ENCODE measurements at regions of chr1 and their contacts with region 1.

Region 1: DNA sequence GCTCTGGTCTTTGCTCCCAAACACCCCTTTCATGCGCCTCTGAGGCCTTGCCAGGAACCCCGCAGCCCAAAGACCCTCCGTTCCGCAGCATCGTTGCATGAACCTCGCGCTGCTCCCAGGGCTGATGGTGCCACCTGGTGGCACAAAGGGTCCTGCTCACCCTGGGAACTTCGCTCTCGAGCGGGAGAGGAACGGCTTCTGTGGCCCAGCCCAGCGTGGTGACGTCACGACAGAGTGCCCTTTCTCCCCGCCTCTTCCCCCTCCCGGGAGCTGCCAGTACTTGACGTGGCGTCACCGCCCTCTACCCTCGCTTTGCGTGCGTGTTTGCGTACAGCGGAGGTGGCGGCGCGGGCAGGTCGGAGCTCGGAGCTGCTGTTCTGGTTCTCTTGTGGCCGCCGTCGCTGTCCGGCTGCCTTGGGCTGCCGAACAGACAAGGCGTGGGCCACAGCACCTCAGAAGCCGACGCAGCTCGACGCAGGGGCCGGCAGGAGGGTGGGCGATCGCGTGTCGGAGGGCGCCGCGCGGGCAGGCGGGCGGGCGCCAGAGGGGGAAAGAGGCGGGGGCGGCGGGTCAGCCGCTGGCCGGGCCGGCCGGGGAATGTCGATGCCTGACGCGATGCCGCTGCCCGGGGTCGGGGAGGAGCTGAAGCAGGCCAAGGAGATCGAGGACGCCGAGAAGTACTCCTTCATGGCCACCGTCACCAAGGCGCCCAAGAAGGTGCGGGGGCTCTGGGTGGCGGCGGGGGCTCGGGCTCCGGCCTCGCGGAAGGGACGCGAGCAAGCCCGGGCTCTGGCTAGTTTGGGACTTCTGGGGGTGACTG is at the start of gene AHCYL1:
- DNase-seq: peak; percentile 98 to 99 (median 98)
- H3K4me3 ChIP-seq: peak within 1 kb of the TSS; percentile 76 to 90 (median 81)
- H3K27ac ChIP-seq: peak within 1 kb of the TSS; percentile 84 to 91
- H3K4me1 ChIP-seq: peaks cover 9 to 33% (median 17%) of the 10 kb centered on the region in 4 experiments
- H3K27me3 ChIP-seq: no peaks in the 10 kb centered on the region

Region 2: DNA sequence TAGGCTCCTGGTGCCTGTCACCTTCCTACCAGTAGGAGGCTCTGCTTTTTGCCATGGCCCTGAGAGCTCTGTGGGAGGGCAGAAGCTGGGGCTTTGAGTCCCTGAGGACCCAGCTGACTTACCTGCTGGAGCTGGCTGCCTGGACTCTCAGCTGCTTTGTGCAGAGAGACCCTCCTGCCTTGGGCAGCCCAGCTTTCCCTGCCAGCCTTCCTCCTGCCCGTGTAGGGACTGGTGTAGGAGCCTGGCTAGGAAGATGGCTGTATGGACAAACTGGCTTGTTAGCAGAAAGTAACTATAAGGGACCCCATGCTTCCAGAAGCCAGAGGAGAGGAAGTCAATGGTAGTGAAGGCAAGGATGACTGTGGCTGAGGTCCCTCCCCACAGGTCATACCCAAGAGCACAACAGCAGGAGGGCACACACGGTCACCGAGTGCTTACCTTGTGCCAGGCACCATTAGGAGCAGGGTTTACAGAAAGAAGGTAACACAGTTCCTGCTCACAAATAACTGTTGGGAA is 745.0 kb before region 1 on chr1:
- CTCF ChIA-PET with region 1: no interaction called
- POLR2A ChIA-PET with region 1: no interaction called
- DNase-seq: peak; percentile 27 to 47 (median 43)
- H3K4me3 ChIP-seq: no peak overlapping the region
- H3K27ac ChIP-seq: no peak overlapping the region
- H3K4me1 ChIP-seq: no peaks in the 10 kb centered on the region
- H3K27me3 ChIP-seq: peaks cover 0 to 46% (median 22%) of the 10 kb centered on the region in 5 experiments

Region 3: GRCh38 chr1:109548321-109549267 is 436.1 kb before region 1 on chr1 and contains the start of gene GNAI3:
- CTCF ChIA-PET with region 1: interaction called, 10 read pairs
- POLR2A ChIA-PET with region 1: no interaction called
- DNase-seq: peak; percentile 98 to 99 (median 99)
- H3K4me3 ChIP-seq: peak within 1 kb of the TSS; percentile 96 to 99 (median 98)
- H3K27ac ChIP-seq: peak within 1 kb of the TSS; percentile 95 to 98
- H3K4me1 ChIP-seq: peaks cover 21 to 35% (median 32%) of the 10 kb centered on the region in 4 experiments
- H3K27me3 ChIP-seq: no peaks in the 10 kb centered on the region

Region 4: DNA sequence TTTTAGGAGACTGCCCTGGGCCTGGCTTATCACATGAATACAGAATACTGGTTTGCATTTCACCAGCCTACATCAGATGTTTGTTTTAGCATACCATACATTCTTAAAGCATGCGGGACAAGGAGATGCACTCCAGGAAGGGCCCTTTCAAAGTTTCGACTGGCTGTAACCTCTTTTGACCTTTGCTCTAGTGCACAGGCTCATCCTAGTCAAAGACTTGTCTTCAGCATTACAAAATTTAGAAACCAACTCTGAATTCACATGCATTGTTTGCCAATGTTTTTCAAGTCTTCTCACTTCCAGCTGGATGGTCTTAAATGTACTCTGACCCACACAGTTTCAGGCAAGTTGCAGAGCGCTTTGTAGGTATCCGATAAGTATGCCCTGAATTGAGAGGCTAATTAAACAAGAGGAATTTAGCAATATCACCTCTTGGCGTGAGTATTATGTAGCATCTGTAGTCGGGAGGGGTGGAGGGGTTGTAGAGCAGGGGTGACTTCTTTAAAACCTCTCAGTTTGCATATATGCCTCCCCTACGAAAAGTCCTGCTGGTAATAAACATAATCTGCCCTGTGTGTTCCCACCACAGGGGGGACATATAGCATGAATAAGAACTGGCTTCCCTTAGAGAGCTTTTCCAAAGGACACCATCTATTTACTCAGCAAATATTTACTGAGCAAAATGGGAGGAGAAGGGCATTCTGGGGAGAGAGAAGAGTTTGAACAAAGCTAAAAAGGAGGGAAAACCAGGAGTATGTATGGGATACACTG is 24.5 kb before region 1 on chr1:
- CTCF ChIA-PET with region 1: interaction called, 21 read pairs
- POLR2A ChIA-PET with region 1: interaction called, 3 read pairs
- DNase-seq: no peak
- H3K4me3 ChIP-seq: no peak overlapping the region
- H3K27ac ChIP-seq: no peak overlapping the region
- H3K4me1 ChIP-seq: no peaks in the 10 kb centered on the region
- H3K27me3 ChIP-seq: no peaks in the 10 kb centered on the region

Region 5: DNA sequence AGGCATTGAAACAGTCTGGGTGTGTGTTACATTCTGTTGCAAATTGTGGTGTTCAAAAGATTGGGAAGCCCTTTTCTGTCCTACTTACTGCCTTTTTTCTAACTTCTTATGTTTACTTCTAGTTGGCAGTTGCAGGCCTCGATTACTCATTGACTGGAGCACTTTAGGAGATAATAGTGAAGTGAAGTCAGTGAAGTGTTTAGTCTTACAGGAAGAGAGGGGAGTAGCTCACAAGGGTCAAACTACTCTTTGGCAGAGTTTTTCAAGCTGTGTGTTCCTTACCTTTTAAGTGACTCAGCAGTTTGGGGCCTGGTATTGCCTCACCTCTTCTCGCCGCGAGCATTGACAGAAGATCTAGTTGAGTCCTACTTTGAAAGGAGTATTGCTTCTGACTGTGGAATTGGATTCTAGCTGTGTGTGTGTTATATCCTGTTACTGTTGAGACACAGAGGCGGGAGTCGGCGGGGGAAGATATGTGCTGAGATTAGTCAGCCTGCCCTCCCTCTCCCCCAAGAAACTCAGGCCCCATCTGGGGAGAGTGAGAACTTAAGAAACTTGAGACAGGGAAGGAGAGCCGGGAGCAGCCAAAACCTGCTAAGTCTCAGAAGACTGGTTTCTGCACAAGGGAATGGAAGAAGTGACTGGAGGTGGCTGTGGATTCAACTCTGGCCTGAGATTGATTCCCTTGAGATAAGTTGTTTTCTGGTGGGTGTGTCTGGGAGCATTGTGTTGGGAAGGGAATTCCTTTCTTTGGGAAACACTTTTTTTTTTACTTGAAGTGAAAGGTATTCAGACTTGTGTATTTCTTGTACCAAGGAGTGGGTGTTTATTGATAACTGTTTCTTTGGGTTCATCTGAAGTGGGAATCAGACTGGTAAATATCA is 19.3 kb after region 1 on chr1:
- CTCF ChIA-PET with region 1: interaction called, 47 read pairs
- POLR2A ChIA-PET with region 1: no interaction called
- DNase-seq: peak; percentile 26 to 74 (median 62)
- H3K4me3 ChIP-seq: no peak overlapping the region
- H3K27ac ChIP-seq: peak overlapping the region; percentile 22 to 50
- H3K4me1 ChIP-seq: peaks cover 0 to 17% (median 10%) of the 10 kb centered on the region in 4 experiments
- H3K27me3 ChIP-seq: no peaks in the 10 kb centered on the region

Region 6: DNA sequence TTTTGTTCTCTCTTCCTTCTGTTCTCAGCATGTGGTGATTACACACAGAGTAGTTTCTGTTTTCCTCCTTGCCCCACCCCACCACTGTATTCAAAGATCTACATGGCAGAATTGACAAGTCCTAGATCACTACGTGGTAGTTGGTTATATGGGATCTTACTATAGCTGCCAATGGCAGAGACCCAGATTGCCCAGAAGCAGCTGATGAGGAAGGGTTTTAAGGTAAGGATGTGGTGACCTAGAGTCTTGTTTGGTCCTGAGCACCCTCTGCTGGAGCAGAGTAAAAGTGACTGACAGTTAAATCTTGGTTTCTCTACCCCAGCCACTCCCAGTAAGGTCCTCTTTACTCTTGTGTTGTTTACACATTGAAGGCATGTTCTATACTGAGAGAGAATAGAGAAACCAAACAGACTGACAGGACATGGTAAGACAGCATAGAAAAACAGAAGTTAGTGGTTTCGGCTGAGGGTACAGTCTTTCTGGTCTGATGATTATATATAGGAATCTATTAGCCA is 26.9 kb after region 1 on chr1:
- CTCF ChIA-PET with region 1: interaction called, 47 read pairs
- POLR2A ChIA-PET with region 1: no interaction called
- DNase-seq: peak; percentile 65 to 82 (median 78)
- H3K4me3 ChIP-seq: no peak overlapping the region
- H3K27ac ChIP-seq: no peak overlapping the region
- H3K4me1 ChIP-seq: no peaks in the 10 kb centered on the region
- H3K27me3 ChIP-seq: no peaks in the 10 kb centered on the region

Measured in common myeloid progenitor, CD34-positive (primary cell).